ENCODE measurements at regions of chr7 and their contacts with region 1.

Region 1: GRCh38 chr7:39517240-39517639 is 49.0 kb upstream of the YAE1 start:
- DNase-seq: no peak
- H3K4me3 ChIP-seq: no peak overlapping the region
- H3K4me3 Mint-ChIP-seq: no peak overlapping the region
- H3K27ac Mint-ChIP-seq: no peak overlapping the region
- H3K4me1 ChIP-seq: no peaks in the 10 kb centered on the region
- H3K4me1 Mint-ChIP-seq: no peaks in the 10 kb centered on the region
- H3K27me3 ChIP-seq: no peaks in the 10 kb centered on the region
- H3K27me3 Mint-ChIP-seq: peaks cover 8% of the 10 kb centered on the region
- CTCF ChIP-seq: no peak

Region 2: DNA sequence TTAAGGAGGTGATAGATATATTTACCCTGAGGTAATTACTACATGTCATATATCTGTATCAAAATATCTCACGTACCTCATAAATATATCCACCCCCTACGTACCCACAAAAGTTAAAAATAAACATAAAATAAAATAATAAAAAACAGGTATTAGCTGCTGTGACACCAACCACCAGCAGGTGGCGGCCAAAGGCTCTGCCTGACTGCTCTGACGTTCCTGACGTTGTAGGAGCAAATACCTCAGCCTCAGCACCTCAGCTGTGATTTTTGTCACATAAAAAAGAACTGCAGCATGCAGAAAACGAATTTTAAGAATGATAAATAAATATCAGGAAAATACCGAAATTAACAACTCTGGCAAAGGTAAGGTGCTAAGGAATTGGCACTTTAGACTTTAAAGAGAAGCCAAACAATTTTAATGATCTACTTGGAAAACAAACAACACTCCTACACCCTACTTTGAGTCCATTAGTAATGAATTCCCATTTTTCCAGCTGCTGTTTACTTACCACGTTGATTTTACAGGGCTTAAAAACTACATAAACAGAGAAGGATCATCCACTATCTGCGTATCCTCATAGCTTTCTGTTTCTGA is 1118.4 kb before region 1 on chr7:
- CTCF ChIA-PET with region 1: no interaction called
- POLR2A ChIA-PET with region 1: no interaction called
- intact Hi-C with region 1: loop called (anchors 1 kb)
- DNase-seq: peak in 1 of 2 experiments; percentile 55
- H3K4me3 ChIP-seq: no peak overlapping the region
- H3K4me3 Mint-ChIP-seq: no peak overlapping the region
- H3K27ac Mint-ChIP-seq: no peak overlapping the region
- H3K4me1 ChIP-seq: no peaks in the 10 kb centered on the region
- H3K4me1 Mint-ChIP-seq: peaks cover 5% of the 10 kb centered on the region
- H3K27me3 ChIP-seq: no peaks in the 10 kb centered on the region; the same call in 1 of the 2 replicates
- H3K27me3 Mint-ChIP-seq: peaks cover 14% of the 10 kb centered on the region
- CTCF ChIP-seq: peak; percentile 74 to 86

Region 3: DNA sequence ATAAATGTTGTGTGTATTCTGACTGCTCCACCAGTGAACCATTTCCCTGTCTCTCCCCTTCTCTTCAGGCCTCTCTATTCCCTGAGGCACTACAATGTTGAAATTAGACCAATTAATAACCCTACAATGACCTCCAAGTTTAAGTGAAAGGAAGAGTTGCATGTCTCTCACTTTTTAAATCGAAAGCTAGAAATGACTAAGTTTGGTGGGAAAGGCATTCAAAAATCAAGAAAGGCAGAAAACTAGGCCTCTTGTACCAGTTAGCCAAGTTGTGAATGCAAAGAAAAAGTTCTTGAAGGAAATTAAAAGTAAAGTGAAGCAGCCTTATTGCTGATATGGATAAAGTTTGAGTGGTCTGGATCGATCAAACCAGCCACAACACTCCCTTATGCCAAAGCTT is 149.3 kb before region 1 on chr7:
- CTCF ChIA-PET with region 1: no interaction called
- POLR2A ChIA-PET with region 1: no interaction called
- intact Hi-C with region 1: no loop called
- DNase-seq: no peak
- H3K4me3 ChIP-seq: no peak overlapping the region
- H3K4me3 Mint-ChIP-seq: no peak overlapping the region
- H3K27ac Mint-ChIP-seq: no peak overlapping the region
- H3K4me1 ChIP-seq: no peaks in the 10 kb centered on the region
- H3K4me1 Mint-ChIP-seq: no peaks in the 10 kb centered on the region
- H3K27me3 ChIP-seq: no peaks in the 10 kb centered on the region; the same call in 1 of the 2 replicates
- H3K27me3 Mint-ChIP-seq: peaks cover 23% of the 10 kb centered on the region
- CTCF ChIP-seq: no peak

Region 4: DNA sequence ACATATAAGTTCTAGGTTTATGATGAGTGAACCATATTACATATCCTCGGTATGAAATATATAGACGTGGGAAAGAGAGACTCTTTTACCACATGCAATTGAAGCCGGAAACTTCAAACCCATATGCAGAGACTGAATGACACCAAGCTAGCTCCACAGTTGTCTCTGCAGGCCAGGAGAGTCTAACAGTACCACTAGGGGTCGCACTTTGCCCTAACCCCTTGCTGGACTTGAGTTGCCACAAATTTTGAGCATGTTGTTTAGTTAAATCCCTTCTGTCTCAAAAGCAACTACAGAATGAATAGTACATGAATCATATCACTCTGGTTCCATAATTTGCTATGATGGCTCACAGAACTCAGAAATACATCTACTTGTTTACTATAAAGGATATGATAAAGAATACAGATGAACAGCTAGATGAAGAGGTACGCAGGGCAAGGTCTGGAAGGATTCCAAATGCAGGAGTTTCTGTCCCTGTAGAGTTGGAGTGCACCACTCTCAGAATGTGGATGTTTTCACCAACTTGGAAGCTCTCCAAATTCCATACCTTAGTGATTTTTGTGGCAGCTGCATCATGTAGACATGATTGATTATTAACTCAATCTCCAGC is 63.4 kb before region 1 on chr7:
- CTCF ChIA-PET with region 1: no interaction called
- POLR2A ChIA-PET with region 1: no interaction called
- intact Hi-C with region 1: loop called (anchors 1 kb)
- DNase-seq: peak; percentile 53 to 62
- H3K4me3 ChIP-seq: no peak overlapping the region
- H3K4me3 Mint-ChIP-seq: no peak overlapping the region
- H3K27ac Mint-ChIP-seq: no peak overlapping the region
- H3K4me1 ChIP-seq: no peaks in the 10 kb centered on the region
- H3K4me1 Mint-ChIP-seq: no peaks in the 10 kb centered on the region
- H3K27me3 ChIP-seq: no peaks in the 10 kb centered on the region
- H3K27me3 Mint-ChIP-seq: peaks cover 5% of the 10 kb centered on the region
- CTCF ChIP-seq: peak; percentile 69 to 80

Region 5: DNA sequence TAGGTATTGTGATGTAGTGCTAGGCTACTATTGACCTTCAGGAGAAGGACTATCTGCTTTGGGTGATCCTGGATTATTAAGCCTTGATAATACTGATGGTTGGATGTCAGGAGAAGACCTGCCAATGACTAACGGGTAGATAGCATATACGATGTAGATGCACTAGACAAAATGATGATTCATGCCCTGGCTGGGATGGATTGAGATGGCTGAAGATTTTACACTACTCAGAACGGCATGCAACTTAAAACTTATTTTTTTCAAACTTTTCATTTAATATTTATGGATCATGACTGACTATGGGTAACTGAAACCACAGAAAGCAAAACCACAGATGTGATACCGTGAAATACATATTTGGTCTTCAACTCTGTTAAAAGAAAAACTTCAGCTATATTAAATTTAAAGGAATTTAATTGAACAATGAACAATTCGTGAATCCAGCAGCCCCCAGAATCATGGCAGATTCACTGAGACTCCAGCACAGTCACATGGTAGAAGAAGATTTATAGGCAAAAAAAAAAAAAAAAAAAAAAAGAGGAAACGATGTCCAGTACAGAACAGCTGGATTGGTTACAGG is 308.3 kb after region 1 on chr7:
- CTCF ChIA-PET with region 1: no interaction called
- POLR2A ChIA-PET with region 1: no interaction called
- intact Hi-C with region 1: no loop called
- DNase-seq: no peak
- H3K4me3 ChIP-seq: no peak overlapping the region
- H3K4me3 Mint-ChIP-seq: no peak overlapping the region
- H3K27ac Mint-ChIP-seq: no peak overlapping the region
- H3K4me1 ChIP-seq: no peaks in the 10 kb centered on the region
- H3K4me1 Mint-ChIP-seq: no peaks in the 10 kb centered on the region
- H3K27me3 ChIP-seq: no peaks in the 10 kb centered on the region
- H3K27me3 Mint-ChIP-seq: peaks cover 11% of the 10 kb centered on the region
- CTCF ChIP-seq: no peak

Measured in Caco-2 (cell line).